Spleen (tissue), 13 donors: ENCODE measurements at regions of chr1 and their contacts with region 1.

Region 1: DNA sequence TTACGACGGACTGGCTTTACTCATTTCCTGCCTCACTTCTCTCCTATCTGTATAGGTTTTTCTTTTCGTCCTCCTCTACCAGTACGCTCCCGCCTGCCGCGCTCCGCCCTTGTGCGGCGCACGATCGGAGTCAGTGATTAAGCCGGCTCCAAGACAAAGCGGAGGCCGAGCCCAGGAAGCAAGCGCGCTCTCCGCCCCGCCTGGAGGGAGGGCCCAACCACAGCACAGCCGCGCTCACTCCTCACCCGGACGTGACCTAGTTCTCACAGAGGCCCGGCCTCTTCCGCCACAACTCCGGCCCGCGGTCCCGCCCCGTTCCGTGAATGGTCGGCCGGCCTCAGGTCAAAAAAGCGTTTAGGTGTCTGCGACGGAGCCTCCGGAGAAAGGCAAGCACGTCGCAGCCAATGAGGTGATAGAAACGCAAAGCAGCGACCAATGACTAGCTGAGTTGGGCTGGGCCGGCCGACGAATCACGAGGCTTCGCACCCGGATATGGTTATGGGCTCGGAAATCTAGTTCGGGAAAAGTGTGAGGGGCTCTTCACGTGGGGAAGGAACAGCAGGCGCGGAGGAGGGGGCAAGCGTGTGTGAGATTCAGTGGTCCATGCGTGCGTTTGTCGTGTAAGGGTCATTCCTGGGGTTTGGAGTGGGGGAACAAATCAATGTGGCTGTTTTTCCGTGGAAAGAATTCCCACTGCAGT is at the start of gene METTL13:
- DNase-seq: peak; percentile 100
- H3K4me3 ChIP-seq: peak within 1 kb of the TSS; percentile 57 to 95 (median 72)
- H3K27ac ChIP-seq: peak within 1 kb of the TSS; percentile 81 to 93 (median 89)
- H3K4me1 ChIP-seq: peaks cover 20 to 56% (median 47%) of the 10 kb centered on the region in 6 donors
- H3K27me3 ChIP-seq: no peaks in the 10 kb centered on the region
- CTCF ChIP-seq: peak in 4 of 11 experiments; percentile 14 to 47 (median 36)
- POLR2A ChIP-seq: peak; percentile 78 to 97 (median 88)
- total RNA-seq, gene METTL13: 21.9 to 29.6 (median 26.3) TPM

Region 2: GRCh38 chr1:171485375-171486047 is 295.8 kb before region 1 on chr1 and contains the start of gene PRRC2C:
- intact Hi-C with region 1: loop called (anchors 10 kb)
- DNase-seq: peak; percentile 99
- H3K4me3 ChIP-seq: peak within 1 kb of the TSS; percentile 64 to 93 (median 80)
- H3K27ac ChIP-seq: peak within 1 kb of the TSS; percentile 95 to 100 (median 99)
- H3K4me1 ChIP-seq: peaks cover 36 to 53% (median 50%) of the 10 kb centered on the region in 6 donors
- H3K27me3 ChIP-seq: no peaks in the 10 kb centered on the region
- CTCF ChIP-seq: peak in 7 of 11 experiments; percentile 71 to 91 (median 76)
- POLR2A ChIP-seq: peak in 1 of 3 donors; percentile 29
- total RNA-seq, gene PRRC2C: 142 to 216 (median 186) TPM

Region 3: GRCh38 chr1:171583581-171584201 is 197.6 kb before region 1 on chr1:
- intact Hi-C with region 1: no loop called
- DNase-seq: no peak
- H3K4me3 ChIP-seq: no peak overlapping the region
- H3K27ac ChIP-seq: no peak overlapping the region
- H3K4me1 ChIP-seq: no peaks in the 10 kb centered on the region
- H3K27me3 ChIP-seq: no peaks in the 10 kb centered on the region
- CTCF ChIP-seq: no peak
- POLR2A ChIP-seq: no peak

Region 4: DNA sequence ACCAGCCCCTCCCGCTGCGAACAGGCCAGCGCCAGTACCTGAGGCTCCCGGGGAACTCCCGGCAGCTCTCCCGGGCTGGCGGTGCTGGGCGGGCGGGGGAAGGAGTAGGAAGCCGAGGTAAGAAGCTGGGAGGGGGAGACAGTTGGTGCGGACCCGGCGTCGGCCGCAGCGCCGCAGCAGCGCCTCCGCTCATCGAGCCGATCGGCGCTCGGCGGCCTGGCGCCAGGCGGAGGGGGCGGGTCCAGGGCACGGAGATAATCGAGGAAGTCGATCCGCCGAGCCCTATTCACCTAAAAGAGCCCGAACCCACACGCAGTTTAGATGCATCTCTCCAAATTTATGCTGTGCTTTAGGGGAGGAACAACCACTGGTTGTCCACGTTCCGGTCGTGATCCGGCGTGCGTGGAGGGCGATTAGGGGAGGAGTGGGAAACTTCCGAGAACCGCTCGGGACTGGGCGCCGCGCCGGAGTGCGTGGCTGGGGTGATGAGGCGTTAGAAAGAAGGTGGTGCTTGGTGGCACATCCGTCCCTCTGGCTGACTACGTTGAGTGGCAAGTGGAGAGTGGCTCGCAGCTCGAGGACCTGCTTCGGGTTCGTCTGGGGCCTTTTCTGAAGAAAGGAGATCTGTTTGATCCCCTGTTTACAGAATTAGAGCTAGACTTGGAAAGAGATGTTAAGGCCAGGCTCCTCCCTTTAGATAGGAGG is 39.3 kb before region 1 on chr1 and contains the start of gene VAMP4:
- intact Hi-C with region 1: loop called (anchors 5 kb)
- DNase-seq: peak; percentile 97
- H3K4me3 ChIP-seq: peak within 1 kb of the TSS; percentile 62 to 95 (median 84)
- H3K27ac ChIP-seq: peak within 1 kb of the TSS; percentile 92 to 99 (median 97)
- H3K4me1 ChIP-seq: peaks cover 30 to 50% (median 39%) of the 10 kb centered on the region in 6 donors
- H3K27me3 ChIP-seq: no peaks in the 10 kb centered on the region
- CTCF ChIP-seq: peak in 3 of 11 experiments; percentile 21 to 27 (median 22)
- POLR2A ChIP-seq: peak; percentile 25 to 69 (median 46)
- total RNA-seq, gene VAMP4: 14.1 to 21.7 (median 16.3) TPM

Region 5: GRCh38 chr1:171841050-171841940 is 60.0 kb after region 1 on chr1 and contains the start of gene DNM3:
- intact Hi-C with region 1: no loop called
- DNase-seq: peak; percentile 95
- H3K4me3 ChIP-seq: peak within 1 kb of the TSS; percentile 55 to 92 (median 80)
- H3K27ac ChIP-seq: peak within 1 kb of the TSS; percentile 39 to 82 (median 74)
- H3K4me1 ChIP-seq: peaks cover 6 to 27% (median 20%) of the 10 kb centered on the region in 6 donors
- H3K27me3 ChIP-seq: peaks cover 0 to 26% (median 12%) of the 10 kb centered on the region in 7 donors
- CTCF ChIP-seq: no peak
- POLR2A ChIP-seq: no peak
- total RNA-seq, gene DNM3: 3.0 to 10.2 (median 6.6) TPM

Region 6: GRCh38 chr1:171929121-171929520 is 147.8 kb after region 1 on chr1:
- intact Hi-C with region 1: no loop called
- DNase-seq: no peak
- H3K4me3 ChIP-seq: no peak overlapping the region
- H3K27ac ChIP-seq: no peak overlapping the region
- H3K4me1 ChIP-seq: no peaks in the 10 kb centered on the region
- H3K27me3 ChIP-seq: no peaks in the 10 kb centered on the region
- CTCF ChIP-seq: no peak
- POLR2A ChIP-seq: no peak